Heart right ventricle (tissue), 16 donors: ENCODE measurements at regions of chr2 and their contacts with region 1.

Region 1: GRCh38 chr2:183428881-183429280 is 304.6 kb downstream of the NUP35 start:
- DNase-seq: no peak
- ATAC-seq: no peak
- H3K4me3 ChIP-seq: no peak overlapping the region
- H3K27ac ChIP-seq: no peak overlapping the region
- H3K4me1 ChIP-seq: no peaks in the 10 kb centered on the region
- H3K27me3 ChIP-seq: no peaks in the 10 kb centered on the region
- CTCF ChIP-seq: no peak

Region 2: DNA sequence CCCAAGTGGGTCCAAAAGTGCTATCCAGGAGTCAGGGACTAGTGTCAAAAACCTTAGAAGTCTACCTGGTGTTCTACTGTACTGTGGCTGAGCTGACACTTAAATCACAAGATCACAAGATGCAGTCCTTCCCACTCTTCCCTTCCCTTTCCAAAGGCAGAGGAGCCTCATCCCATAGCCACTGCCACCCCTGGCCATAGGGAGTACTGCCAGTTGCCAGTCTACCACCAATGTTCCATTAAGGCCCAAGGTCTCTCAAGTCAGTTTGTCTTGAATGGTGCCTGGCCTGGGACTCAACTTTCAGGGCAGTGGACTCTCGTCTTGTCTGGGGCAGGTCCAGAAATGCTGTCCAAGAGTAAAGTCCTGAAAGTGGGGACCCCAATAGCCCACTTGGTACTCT is 280.9 kb after region 1 on chr2:
- intact Hi-C with region 1: no loop called
- DNase-seq: no peak
- ATAC-seq: no peak
- H3K4me3 ChIP-seq: no peak overlapping the region
- H3K27ac ChIP-seq: no peak overlapping the region
- H3K4me1 ChIP-seq: no peaks in the 10 kb centered on the region
- H3K27me3 ChIP-seq: no peaks in the 10 kb centered on the region
- CTCF ChIP-seq: no peak

Region 3: GRCh38 chr2:184053326-184053725 is 624.4 kb after region 1 on chr2:
- intact Hi-C with region 1: loop called in 1 of 10 experiments (anchors 10 kb)
- DNase-seq: no peak
- ATAC-seq: no peak
- H3K4me3 ChIP-seq: no peak overlapping the region
- H3K27ac ChIP-seq: no peak overlapping the region
- H3K4me1 ChIP-seq: no peaks in the 10 kb centered on the region
- H3K27me3 ChIP-seq: no peaks in the 10 kb centered on the region
- CTCF ChIP-seq: no peak